CD8-positive, alpha-beta memory T cell (primary cell): ENCODE measurements at regions of chr21 and their contacts with region 1.

Region 1: DNA sequence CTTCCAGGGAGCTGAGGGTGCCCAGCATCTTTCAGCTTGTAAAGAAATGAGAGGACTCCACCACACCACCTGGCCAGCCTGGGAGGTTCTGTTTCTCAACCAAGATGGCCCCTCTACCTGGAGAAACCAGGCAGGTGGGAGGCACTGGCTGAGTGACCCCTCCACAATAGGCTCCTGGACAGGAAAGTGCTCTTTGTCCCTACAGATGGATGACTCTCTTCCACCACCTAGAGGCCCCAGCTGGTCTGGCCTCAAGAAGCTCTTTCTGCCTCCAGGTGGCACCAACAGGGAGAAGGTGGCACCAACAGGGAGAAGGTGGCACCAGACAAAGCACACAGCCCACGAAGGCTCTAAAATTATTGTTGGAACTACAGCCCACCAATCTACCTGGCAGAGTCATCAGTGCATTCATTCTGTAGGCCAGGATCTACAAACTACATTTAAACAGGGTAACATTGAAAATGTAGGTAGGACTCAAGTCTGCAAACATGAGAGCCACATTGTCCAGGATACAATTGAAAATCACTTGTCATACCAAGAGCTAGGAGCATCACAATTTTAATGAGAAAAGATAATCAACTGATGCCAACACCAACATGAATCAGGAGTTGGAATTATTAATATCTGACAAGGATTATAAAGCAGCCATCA is 14.4 kb downstream of the TMPRSS3 start:
- DNase-seq: peak in 2 of 5 donors; percentile 30 to 75
- H3K4me3 ChIP-seq: no peak overlapping the region
- H3K4me3 Mint-ChIP-seq: no peak overlapping the region
- H3K27ac ChIP-seq: no peak overlapping the region
- H3K27ac Mint-ChIP-seq: peak overlapping the region in 1 of 8 donors; percentile 73
- H3K4me1 ChIP-seq: peaks cover 10% of the 10 kb centered on the region
- H3K4me1 Mint-ChIP-seq: peaks cover 8 to 18% (median 8%) of the 10 kb centered on the region in 3 donors
- H3K27me3 ChIP-seq: no peaks in the 10 kb centered on the region
- H3K27me3 Mint-ChIP-seq: peaks cover 0 to 1% of the 10 kb centered on the region in 2 donors

Region 2: GRCh38 chr21:42027822-42028765 is 353.4 kb before region 1 on chr21:
- CTCF ChIA-PET with region 1: no interaction called
- POLR2A ChIA-PET with region 1: no interaction called
- DNase-seq: no peak
- H3K4me3 ChIP-seq: no peak overlapping the region
- H3K4me3 Mint-ChIP-seq: no peak overlapping the region
- H3K27ac ChIP-seq: no peak overlapping the region
- H3K27ac Mint-ChIP-seq: no peak overlapping the region
- H3K4me1 ChIP-seq: no peaks in the 10 kb centered on the region
- H3K4me1 Mint-ChIP-seq: no peaks in the 10 kb centered on the region
- H3K27me3 ChIP-seq: no peaks in the 10 kb centered on the region
- H3K27me3 Mint-ChIP-seq: peaks cover 3 to 4% of the 10 kb centered on the region in 2 donors

Region 3: DNA sequence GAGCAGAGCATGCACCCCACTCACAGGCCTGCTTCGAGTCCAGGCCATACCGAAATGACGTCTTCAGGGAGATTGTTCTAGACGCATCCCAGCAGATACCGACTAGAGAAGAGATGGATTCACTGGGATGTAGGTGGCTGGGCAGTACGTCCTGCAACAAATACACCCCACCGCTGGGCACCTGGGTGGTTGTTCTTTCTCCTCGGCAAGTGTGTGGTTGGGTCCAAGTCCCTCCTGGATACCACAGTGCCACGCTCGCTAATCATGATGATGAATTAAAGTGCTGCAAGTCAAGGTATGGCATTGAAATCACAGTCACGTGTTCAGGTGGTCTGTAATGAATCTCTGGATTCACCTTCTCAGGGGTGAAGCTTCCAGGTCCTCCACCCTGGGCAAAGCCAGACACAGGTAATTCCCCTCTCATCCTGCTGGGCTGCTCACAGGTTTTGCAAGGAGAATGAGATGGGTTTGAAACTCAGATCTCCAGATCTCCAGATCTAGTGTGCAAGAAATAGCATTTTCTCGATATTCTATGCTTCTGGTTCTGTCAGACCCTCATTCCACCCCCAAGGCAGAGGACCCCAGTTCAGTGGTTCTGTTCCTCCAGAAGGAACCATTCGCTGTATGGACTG is 68.0 kb after region 1 on chr21:
- CTCF ChIA-PET with region 1: interaction called, 20 read pairs
- POLR2A ChIA-PET with region 1: no interaction called
- DNase-seq: no peak
- H3K4me3 ChIP-seq: no peak overlapping the region
- H3K4me3 Mint-ChIP-seq: no peak overlapping the region
- H3K27ac ChIP-seq: no peak overlapping the region
- H3K27ac Mint-ChIP-seq: peak overlapping the region; percentile 43 to 94 (median 90)
- H3K4me1 ChIP-seq: peaks cover 24% of the 10 kb centered on the region
- H3K4me1 Mint-ChIP-seq: peaks cover 17 to 43% (median 26%) of the 10 kb centered on the region in 3 donors
- H3K27me3 ChIP-seq: no peaks in the 10 kb centered on the region
- H3K27me3 Mint-ChIP-seq: no peaks in the 10 kb centered on the region